ENCODE measurements at regions of chr9 and their contacts with region 1.

Region 1: DNA sequence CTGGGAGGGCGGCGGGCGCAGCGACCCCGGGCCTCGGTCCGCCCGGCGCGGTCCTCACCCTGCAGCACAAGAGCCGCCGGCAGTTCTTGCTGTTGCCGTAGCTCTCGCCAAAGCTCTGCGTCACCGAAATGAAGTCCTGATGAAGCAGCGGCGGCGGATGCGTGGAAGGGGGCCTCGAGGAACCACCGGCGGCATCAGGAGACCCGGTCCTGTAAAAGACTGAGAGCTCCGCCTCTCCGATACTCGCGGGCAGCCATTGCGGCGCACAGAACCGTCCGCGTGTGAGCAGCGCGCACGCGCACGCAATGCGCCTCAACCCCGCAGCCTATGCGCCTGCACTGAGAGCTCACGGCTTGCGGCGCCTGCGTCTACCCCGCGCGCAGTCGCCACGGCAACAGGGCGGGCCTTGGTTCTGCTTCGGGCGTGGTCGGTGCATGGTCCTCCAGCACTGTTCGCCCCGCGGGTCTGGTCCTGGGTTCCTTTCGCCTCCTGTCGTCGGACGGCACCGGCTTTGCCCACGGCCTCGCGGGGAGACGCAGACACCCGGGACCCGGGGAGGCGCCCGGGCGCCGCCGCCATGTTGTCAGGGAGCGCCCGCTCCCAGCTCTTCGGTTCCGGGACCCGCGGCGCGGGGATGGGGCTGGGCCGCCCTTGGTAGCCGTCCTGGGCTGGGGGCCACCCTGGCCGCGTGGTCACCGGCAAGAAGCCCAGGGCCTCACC is 9.3 kb upstream of the GRIN1 start:
- DNase-seq: peak; percentile 63 to 72
- ATAC-seq: peak; percentile 93 to 96
- H3K4me3 ChIP-seq: peak overlapping the region; percentile 62 to 88 (median 78)
- H3K27ac ChIP-seq: peak overlapping the region in 3 of 4 donors; percentile 49 to 54 (median 54)
- H3K4me1 ChIP-seq: peaks cover 12 to 17% of the 10 kb centered on the region in 2 donors
- H3K27me3 ChIP-seq: peaks cover 22 to 30% (median 28%) of the 10 kb centered on the region in 3 donors
- CTCF ChIP-seq: no peak
- POLR2A ChIP-seq: no peak

Region 2: DNA sequence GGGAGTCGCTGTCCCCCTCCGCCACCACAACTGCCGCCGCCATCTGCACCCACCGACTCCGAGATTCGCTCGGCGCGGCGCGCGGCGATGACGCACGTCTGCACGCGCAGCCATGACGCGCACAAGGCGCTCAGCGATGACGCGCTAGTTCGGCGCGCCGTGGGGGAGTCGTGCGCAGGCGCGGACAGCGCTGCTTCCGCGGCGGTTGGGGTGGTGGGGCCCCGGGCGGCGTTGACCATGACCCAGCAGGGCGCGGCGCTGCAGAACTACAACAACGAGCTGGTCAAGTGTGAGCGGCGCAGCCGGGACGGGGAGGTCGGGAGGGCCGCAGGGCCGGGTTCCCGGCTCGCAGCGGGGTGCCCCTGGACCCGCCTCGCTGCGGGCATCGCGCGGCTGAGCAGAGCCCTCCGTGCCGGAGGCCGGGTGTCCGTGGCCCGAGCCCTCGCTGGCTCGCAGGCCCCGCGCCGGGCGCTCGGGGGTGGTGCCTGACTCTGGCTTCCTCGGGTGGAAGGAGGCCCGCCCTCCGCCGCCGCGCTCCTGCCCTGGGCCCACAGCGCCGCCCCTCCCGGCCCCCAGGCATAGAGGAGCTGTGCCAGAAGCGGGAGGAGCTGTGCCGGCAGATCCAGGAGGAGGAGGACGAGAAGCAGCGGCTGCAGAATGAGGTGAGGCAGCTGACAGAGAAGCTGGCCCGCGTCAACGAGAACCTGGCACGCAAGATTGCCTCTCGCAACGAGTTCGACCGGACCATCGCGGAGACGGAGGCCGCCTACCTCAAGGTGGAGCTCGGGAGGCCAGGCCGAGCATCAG is 59.1 kb after region 1 on chr9 and contains the starts of genes ANAPC2 and SSNA1:
- in situ Hi-C with region 1: no loop called
- intact Hi-C with region 1: no loop called
- DNase-seq: peak; percentile 79 to 88
- ATAC-seq: peak; percentile 92 to 95
- H3K4me3 ChIP-seq: peak within 1 kb of the TSS; percentile 68 to 100 (median 97)
- H3K27ac ChIP-seq: peak within 1 kb of the TSS; percentile 85 to 98 (median 96)
- H3K4me1 ChIP-seq: peaks cover 39 to 44% of the 10 kb centered on the region in 2 donors
- H3K27me3 ChIP-seq: no peaks in the 10 kb centered on the region
- CTCF ChIP-seq: peak in 4 of 5 experiments; percentile 8 to 72 (median 38)
- POLR2A ChIP-seq: peak; percentile 84 to 92
- total RNA-seq, gene ANAPC2: 10.2 to 12.4 (median 10.8) TPM
- total RNA-seq, gene SSNA1: 73.3 to 164 (median 94.4) TPM

Region 3: GRCh38 chr9:137217276-137218211 is 87.9 kb after region 1 on chr9:
- in situ Hi-C with region 1: loop called in 2 of 4 experiments (anchors 10 kb)
- intact Hi-C with region 1: no loop called
- DNase-seq: peak in 1 of 2 donors; percentile 47
- ATAC-seq: peak; percentile 35 to 56
- H3K4me3 ChIP-seq: peak overlapping the region; percentile 39 to 47 (median 41)
- H3K27ac ChIP-seq: peak overlapping the region; percentile 14 to 56 (median 34)
- H3K4me1 ChIP-seq: peaks cover 9 to 21% of the 10 kb centered on the region in 2 donors
- H3K27me3 ChIP-seq: no peaks in the 10 kb centered on the region
- CTCF ChIP-seq: no peak
- POLR2A ChIP-seq: no peak